ENCODE measurements at regions of chr22 and their contacts with region 1.

Region 1: DNA sequence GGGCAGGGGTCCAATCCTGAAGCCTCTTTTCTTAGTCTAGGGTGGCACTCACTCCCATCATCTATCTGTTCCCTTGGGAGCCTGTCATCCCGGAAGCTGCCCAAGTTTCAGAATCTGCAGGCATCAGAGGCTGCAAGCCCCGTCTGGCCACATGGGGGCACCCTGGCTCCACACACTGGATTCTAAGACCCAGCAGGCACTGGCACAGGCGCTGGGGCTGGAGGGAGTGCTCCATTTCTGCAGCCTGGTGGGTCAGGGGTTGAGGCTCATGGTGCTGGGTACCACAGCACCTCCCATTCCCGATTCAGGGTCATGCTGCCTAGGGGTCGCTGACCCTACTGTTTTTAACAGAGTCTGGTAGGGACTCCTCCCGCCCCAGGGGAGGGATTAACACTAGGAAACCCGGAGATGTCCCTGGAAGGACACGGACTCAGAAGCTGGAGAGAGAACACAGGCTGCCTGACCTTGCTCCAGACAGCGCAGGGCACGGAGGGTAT is 243.9 kb upstream of the SYN3 start:
- DNase-seq: peak; percentile 60
- ATAC-seq: peak; percentile 99
- H3K4me3 ChIP-seq: no peak overlapping the region
- H3K27ac ChIP-seq: no peak overlapping the region
- H3K4me1 ChIP-seq: no peaks in the 10 kb centered on the region
- H3K27me3 ChIP-seq: no peaks in the 10 kb centered on the region
- CTCF ChIP-seq: peak; percentile 96
- POLR2A ChIP-seq: peak; percentile 65
- RAD21 ChIP-seq: peak; percentile 99

Region 2: GRCh38 chr22:32951076-32951806 is 350.9 kb before region 1 on chr22:
- CTCF ChIA-PET with region 1: no interaction called
- POLR2A ChIA-PET with region 1: no interaction called
- dilution Hi-C with region 1: no loop called
- in situ Hi-C with region 1: no loop called
- intact Hi-C with region 1: no loop called
- DNase-seq: no peak
- ATAC-seq: no peak
- H3K4me3 ChIP-seq: no peak overlapping the region
- H3K27ac ChIP-seq: no peak overlapping the region
- H3K4me1 ChIP-seq: no peaks in the 10 kb centered on the region
- H3K27me3 ChIP-seq: peaks cover 4% of the 10 kb centered on the region
- CTCF ChIP-seq: no peak
- POLR2A ChIP-seq: no peak
- RAD21 ChIP-seq: no peak

Region 3: DNA sequence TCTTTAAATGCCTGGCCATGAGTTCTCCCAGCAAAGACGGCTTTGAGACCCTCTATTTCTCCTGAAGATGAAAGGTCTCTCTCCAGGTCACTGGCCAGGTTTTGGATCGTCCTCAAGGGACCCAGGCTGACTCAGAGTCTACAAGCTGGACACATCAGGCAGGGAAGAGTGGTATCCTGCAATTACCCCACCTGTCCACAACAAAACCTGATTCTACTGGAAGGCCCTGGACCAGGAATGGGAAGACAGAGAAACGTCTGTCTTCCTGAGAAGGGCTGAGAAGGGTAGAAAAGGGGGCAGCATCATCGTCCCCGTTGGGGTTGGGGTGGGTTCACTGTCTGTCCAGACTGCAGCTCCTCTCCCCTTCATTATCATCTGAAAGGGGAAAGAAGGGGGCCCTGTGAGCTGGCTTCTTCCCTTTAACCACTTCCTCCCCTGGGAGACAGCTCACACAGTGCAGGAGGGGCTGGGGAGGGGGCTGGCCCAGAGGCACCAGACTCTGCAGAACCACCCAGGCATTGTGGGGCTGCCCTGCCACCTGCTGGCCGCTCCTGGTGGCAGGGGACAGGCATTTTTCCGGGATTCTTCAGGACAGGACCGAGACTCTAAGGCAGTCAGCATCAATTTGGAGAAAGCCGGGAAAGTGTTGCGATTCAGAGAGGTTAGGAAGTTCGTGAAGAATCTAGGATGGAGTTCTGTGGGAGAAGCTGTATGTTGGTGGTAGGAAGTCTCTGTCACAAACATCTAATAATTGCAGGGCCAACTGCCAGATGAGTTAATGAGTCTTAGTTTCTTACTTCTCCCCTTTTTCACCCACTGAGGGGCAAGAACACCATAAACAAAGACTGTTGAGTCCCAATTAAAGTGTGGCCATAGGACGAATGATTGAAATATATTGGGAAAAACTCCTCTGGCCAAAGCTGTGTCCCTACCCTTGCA is 301.5 kb before region 1 on chr22:
- CTCF ChIA-PET with region 1: no interaction called
- POLR2A ChIA-PET with region 1: no interaction called
- dilution Hi-C with region 1: no loop called
- in situ Hi-C with region 1: no loop called
- intact Hi-C with region 1: no loop called
- DNase-seq: peak; percentile 32
- ATAC-seq: peak; percentile 99
- H3K4me3 ChIP-seq: no peak overlapping the region
- H3K27ac ChIP-seq: no peak overlapping the region
- H3K4me1 ChIP-seq: no peaks in the 10 kb centered on the region
- H3K27me3 ChIP-seq: peaks cover 20% of the 10 kb centered on the region
- CTCF ChIP-seq: peak; percentile 89
- POLR2A ChIP-seq: no peak
- RAD21 ChIP-seq: peak; percentile 88

Region 4: DNA sequence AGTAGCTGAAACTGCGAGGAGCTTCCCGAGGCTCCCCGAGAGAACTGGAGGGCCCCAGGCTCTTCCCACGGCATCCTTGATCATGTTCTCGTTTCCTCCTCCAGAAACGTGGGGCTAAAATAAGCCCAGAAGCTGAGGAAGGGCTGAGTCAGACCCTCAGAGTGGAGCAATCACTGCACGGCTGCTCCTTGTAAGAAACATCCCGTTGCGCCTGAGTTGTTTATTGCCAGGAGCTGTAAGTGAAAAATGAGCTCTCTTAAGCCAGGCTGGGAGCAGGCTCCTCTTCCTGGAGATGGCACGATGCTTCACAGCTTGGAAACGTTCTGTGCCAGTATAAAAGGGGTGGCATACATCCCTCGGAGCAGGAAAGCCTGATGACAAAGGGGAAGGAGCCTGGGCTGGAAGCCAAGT is 196.6 kb before region 1 on chr22:
- CTCF ChIA-PET with region 1: no interaction called
- POLR2A ChIA-PET with region 1: no interaction called
- dilution Hi-C with region 1: no loop called
- in situ Hi-C with region 1: no loop called
- intact Hi-C with region 1: no loop called
- DNase-seq: peak; percentile 28
- ATAC-seq: peak; percentile 72
- H3K4me3 ChIP-seq: no peak overlapping the region
- H3K27ac ChIP-seq: no peak overlapping the region
- H3K4me1 ChIP-seq: no peaks in the 10 kb centered on the region
- H3K27me3 ChIP-seq: no peaks in the 10 kb centered on the region
- CTCF ChIP-seq: no peak
- POLR2A ChIP-seq: no peak
- RAD21 ChIP-seq: no peak

Region 5: DNA sequence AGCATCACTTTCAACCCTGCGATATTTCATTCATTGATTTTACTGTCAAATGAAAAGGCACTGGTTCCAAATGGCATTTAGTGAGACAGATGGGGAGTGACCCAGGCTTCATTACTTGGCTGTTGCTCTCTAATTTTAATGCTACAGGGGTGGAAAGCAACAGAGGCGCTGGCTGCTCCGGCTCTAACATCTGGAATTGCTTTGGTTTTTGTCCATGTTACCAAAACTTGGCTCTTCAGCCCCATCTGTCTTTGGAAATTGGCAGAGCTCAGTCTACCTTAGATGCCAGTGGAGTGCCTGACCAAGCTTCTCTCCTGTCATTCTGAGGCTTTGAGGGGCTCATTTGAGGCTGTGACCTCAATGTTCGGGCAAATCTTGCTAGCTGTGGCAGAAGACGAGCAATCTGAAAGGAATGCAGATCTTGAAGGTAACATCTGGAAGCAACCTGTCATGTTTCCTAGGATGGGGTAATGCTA is 165.6 kb after region 1 on chr22:
- CTCF ChIA-PET with region 1: no interaction called
- POLR2A ChIA-PET with region 1: no interaction called
- dilution Hi-C with region 1: no loop called
- in situ Hi-C with region 1: no loop called
- intact Hi-C with region 1: loop called (anchors 5 kb)
- DNase-seq: no peak
- ATAC-seq: no peak
- H3K4me3 ChIP-seq: no peak overlapping the region
- H3K27ac ChIP-seq: no peak overlapping the region
- H3K4me1 ChIP-seq: no peaks in the 10 kb centered on the region
- H3K27me3 ChIP-seq: no peaks in the 10 kb centered on the region
- CTCF ChIP-seq: 0 out of 2 replicates have a peak, but pooled peaks have one; percentile 10
- POLR2A ChIP-seq: no peak
- RAD21 ChIP-seq: no peak

Region 6: GRCh38 chr22:33579448-33580093 is 277.5 kb after region 1 on chr22:
- CTCF ChIA-PET with region 1: interaction called, 4 read pairs
- POLR2A ChIA-PET with region 1: no interaction called
- dilution Hi-C with region 1: no loop called
- in situ Hi-C with region 1: loop called (anchors 5 kb)
- intact Hi-C with region 1: loop called (anchors 1 kb)
- DNase-seq: peak; percentile 38
- ATAC-seq: peak; percentile 99
- H3K4me3 ChIP-seq: no peak overlapping the region
- H3K27ac ChIP-seq: no peak overlapping the region
- H3K4me1 ChIP-seq: no peaks in the 10 kb centered on the region
- H3K27me3 ChIP-seq: no peaks in the 10 kb centered on the region
- CTCF ChIP-seq: peak; percentile 80
- POLR2A ChIP-seq: no peak
- RAD21 ChIP-seq: peak; percentile 74

Region 7: DNA sequence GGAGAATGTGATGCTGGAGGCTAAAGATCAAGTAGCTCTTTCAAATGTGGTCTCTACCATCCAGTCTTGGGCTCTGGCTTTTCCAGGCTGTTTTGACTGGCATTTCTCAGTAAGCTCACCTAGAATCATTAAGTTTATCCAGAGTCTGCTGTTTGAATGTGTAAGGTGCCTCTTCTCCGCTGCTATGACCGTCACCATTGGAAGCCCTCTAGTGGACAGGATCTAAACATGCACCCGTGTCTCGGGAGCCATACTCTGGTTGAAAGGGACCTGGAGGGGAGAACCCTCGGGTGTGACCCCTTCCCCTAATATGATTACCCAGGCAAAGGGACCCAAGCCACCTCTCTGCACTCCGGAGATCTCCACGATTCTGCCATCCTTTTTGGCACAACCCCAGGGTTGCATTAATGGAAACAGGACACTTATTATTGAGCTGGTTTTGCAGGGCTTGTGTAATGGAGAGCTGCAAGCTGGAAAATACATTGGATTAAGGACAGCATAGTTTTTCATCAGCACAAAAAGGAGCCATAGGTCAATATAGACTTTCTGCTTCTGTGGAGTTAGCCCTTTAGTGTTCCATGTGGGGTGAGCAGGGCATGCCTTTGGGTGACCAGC is 809.2 kb after region 1 on chr22:
- CTCF ChIA-PET with region 1: no interaction called
- POLR2A ChIA-PET with region 1: no interaction called
- dilution Hi-C with region 1: no loop called
- in situ Hi-C with region 1: no loop called
- intact Hi-C with region 1: loop called (anchors 5 kb)
- DNase-seq: no peak
- ATAC-seq: peak; percentile 77
- H3K4me3 ChIP-seq: no peak overlapping the region
- H3K27ac ChIP-seq: no peak overlapping the region
- H3K4me1 ChIP-seq: no peaks in the 10 kb centered on the region
- H3K27me3 ChIP-seq: no peaks in the 10 kb centered on the region
- CTCF ChIP-seq: peak; percentile 41
- POLR2A ChIP-seq: no peak
- RAD21 ChIP-seq: peak; percentile 36

Region 8: GRCh38 chr22:35023692-35024363 is 1721.7 kb after region 1 on chr22:
- CTCF ChIA-PET with region 1: no interaction called
- POLR2A ChIA-PET with region 1: no interaction called
- dilution Hi-C with region 1: no loop called
- in situ Hi-C with region 1: no loop called
- intact Hi-C with region 1: loop called (anchors 5 kb)
- DNase-seq: no peak
- ATAC-seq: no peak
- H3K4me3 ChIP-seq: no peak overlapping the region
- H3K27ac ChIP-seq: no peak overlapping the region
- H3K4me1 ChIP-seq: no peaks in the 10 kb centered on the region
- H3K27me3 ChIP-seq: no peaks in the 10 kb centered on the region
- CTCF ChIP-seq: peak; percentile 60
- POLR2A ChIP-seq: no peak
- RAD21 ChIP-seq: peak; percentile 65

Region 9: DNA sequence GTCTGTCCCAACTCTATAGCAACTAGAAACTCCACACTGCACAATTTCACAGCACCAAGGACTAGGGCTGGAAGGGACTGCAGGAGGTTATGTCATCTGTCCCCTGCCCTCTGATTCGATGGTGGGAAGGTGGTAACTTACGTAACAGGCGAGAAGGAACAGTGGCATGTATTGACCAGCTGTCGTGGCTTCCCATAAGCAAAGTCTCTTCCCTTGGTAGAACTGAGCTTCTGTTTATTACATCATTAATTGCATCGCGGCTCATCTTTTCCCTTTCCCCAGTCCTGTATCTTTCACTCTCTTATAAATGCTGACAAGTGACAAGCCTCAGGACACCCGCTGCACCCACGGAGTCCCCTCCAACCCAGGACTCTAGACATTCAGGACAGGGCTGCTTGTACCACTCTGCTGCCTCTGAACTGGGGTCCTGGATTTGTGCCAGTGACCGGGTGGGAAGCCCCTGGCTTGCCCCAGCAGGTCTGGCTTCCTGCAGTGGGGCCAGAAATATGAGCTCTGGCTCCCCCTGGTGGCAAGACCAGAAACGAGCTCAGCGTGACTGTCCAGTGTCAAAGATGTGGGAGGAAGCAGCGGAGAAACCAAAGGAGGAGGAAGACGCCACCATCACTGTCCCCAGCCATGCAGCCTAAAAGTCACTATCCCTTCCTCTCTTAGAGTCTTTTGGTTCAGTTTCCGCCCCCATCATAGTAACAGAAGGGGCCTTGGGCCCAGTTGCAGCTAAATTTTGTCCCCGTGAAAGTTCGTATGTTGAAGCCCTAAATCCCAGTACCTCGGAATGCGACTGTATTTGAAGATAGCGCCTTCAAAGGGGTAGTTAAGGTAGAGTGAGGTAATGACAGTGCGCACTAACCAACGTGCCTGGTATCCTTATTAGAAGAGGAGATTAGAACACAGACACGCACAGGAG is 1848.3 kb after region 1 on chr22:
- CTCF ChIA-PET with region 1: interaction called, 3 read pairs
- POLR2A ChIA-PET with region 1: no interaction called
- dilution Hi-C with region 1: no loop called
- in situ Hi-C with region 1: loop called (anchors 10 kb)
- intact Hi-C with region 1: loop called (anchors 1 kb)
- DNase-seq: peak; percentile 42
- ATAC-seq: peak; percentile 77
- H3K4me3 ChIP-seq: no peak overlapping the region
- H3K27ac ChIP-seq: no peak overlapping the region
- H3K4me1 ChIP-seq: no peaks in the 10 kb centered on the region
- H3K27me3 ChIP-seq: peaks cover 4% of the 10 kb centered on the region
- CTCF ChIP-seq: peak; percentile 60
- POLR2A ChIP-seq: no peak
- RAD21 ChIP-seq: peak; percentile 44